ENCODE measurements at regions of chr9 and their contacts with region 1.

Region 1: GRCh38 chr9:128628471-128629048 is 28.1 kb downstream of the DYNC2I2 start:
- DNase-seq: no peak
- ATAC-seq: peak; percentile 46
- H3K4me3 ChIP-seq: no peak overlapping the region
- H3K27ac ChIP-seq: 0 out of 2 replicates have a peak overlapping the region, but pooled peaks have one; percentile 44
- H3K4me1 ChIP-seq: peaks cover 18% of the 10 kb centered on the region
- H3K27me3 ChIP-seq: no peaks in the 10 kb centered on the region
- CTCF ChIP-seq: no peak

Region 2: DNA sequence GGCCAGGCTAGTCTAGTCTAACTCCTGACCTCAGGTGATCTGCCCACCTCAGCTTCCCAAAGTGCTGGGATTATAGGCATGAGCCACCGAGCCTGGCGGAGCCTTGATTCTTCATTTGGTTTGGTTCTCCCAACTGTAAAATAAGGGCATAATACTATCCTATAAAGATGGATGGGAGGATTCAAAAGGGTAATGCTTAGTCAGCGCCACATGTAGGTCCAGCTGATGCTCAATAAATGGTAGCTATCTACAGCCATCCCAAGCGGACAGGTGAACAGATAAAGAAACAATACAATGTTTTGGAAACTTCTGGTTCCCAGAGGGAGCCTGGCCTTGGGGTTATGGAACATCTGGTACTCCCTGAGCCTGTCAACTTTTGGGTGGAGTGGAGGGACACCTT is 46.8 kb after region 1 on chr9:
- CTCF ChIA-PET with region 1: no interaction called
- POLR2A ChIA-PET with region 1: interaction called, 15 read pairs
- in situ Hi-C with region 1: no loop called
- intact Hi-C with region 1: no loop called
- DNase-seq: no peak
- ATAC-seq: no peak
- H3K4me3 ChIP-seq: no peak overlapping the region
- H3K27ac ChIP-seq: no peak overlapping the region
- H3K4me1 ChIP-seq: no peaks in the 10 kb centered on the region
- H3K27me3 ChIP-seq: no peaks in the 10 kb centered on the region
- CTCF ChIP-seq: no peak

Region 3: GRCh38 chr9:128688512-128689292 is 60.1 kb after region 1 on chr9 and contains the start of gene SET:
- CTCF ChIA-PET with region 1: no interaction called
- POLR2A ChIA-PET with region 1: interaction called, 11 read pairs
- in situ Hi-C with region 1: no loop called
- intact Hi-C with region 1: no loop called
- DNase-seq: no peak
- ATAC-seq: peak; percentile 88
- H3K4me3 ChIP-seq: peak within 1 kb of the TSS; percentile 96 to 97
- H3K27ac ChIP-seq: peak within 1 kb of the TSS; percentile 97
- H3K4me1 ChIP-seq: peaks cover 29% of the 10 kb centered on the region
- H3K27me3 ChIP-seq: no peaks in the 10 kb centered on the region
- CTCF ChIP-seq: no peak
- total RNA-seq, gene SET: 422 TPM

Region 4: DNA sequence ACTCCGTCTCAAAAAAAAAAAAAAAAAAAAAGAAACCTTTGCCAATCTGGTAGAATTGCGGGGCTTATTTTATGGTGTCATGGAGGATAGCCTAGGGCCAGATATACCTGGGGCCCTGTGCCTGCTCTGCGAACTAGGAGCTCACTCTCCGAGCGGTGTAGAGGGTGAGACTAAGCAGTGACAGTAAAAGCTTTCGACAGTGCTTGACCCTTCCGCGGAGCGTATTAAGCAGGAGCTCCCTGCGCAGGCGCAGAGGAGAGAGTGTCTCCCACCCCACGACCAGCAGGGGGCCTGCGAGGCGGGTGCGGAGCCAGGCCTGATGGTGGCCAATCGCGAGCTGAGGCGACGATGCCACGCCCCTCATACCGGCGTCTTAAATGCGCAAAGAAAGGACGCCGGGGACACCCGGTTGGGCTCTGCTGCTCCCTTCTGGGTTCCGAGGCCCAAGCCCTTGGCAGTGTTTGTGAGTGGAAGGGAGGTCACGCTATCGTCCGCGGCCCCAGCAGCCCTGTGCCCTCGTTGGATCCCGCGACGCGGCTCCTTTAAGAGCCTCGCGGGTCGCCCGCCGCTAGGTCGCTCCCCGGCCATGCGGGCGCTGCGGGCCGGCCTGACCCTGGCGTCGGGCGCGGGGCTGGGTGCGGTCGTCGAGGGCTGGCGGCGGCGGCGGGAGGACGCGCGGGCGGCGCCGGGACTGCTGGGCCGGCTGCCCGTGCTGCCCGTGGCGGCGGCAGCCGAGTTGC is 189.7 kb after region 1 on chr9 and contains the start of gene ENDOG:
- CTCF ChIA-PET with region 1: no interaction called
- POLR2A ChIA-PET with region 1: interaction called, 11 read pairs
- in situ Hi-C with region 1: no loop called
- intact Hi-C with region 1: no loop called
- DNase-seq: peak; percentile 87
- ATAC-seq: peak; percentile 89
- H3K4me3 ChIP-seq: peak within 1 kb of the TSS; percentile 53 to 56
- H3K27ac ChIP-seq: peak within 1 kb of the TSS; percentile 72
- H3K4me1 ChIP-seq: peaks cover 3% of the 10 kb centered on the region; the same call in 1 of the 2 replicates
- H3K27me3 ChIP-seq: no peaks in the 10 kb centered on the region
- CTCF ChIP-seq: peak; percentile 89
- total RNA-seq, gene ENDOG: 39.9 TPM